ENCODE measurements at regions of chr2 and their contacts with region 1.

Region 1: DNA sequence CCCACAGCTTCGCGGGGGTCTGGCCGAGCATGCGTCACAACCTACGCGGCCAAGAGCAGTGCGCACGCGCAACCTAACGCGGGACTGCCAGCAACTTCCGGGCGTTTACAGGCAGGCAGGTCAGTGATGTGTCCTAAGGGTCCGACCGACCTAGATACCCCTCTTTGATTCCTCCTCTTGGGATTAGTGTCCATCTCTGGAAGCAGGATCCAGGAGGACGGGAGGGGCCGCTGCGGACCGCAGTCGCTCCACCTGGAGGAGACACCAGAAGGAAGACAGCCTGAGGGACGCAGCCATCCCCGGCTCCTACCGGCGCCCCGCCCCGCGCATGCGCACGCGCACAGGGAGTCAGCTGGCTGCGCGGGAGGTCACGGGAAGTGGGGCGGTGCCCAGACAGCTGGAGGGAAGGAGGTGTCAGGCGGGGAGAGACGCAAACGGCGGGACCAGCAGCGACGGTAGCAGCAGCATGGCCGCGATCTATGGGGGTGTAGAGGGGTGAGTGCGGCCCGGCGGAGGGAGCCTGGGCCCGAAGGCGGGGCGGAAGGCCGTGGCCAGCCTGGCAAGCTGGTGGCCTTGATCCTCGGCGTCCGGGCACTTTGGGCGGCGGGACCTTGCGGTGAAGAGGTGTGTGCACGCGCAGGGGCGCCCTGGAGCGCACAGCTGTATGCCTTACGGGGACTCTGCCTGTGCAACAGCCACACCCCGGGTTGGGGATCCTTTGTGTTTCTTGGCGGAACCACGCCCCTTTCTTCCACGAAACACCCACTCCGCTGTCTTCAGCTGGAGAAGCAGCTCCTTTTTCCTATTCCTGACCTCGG is at the start of gene NAGK:
- DNase-seq: peak; percentile 98
- ATAC-seq: peak; percentile 81
- H3K4me3 Mint-ChIP-seq: peak within 1 kb of the TSS; percentile 98
- H3K27ac Mint-ChIP-seq: peak within 1 kb of the TSS; percentile 97
- H3K4me1 Mint-ChIP-seq: peaks cover 53% of the 10 kb centered on the region
- H3K27me3 Mint-ChIP-seq: no peaks in the 10 kb centered on the region
- total RNA-seq, gene NAGK: 39.7 to 40.6 TPM

Region 2: DNA sequence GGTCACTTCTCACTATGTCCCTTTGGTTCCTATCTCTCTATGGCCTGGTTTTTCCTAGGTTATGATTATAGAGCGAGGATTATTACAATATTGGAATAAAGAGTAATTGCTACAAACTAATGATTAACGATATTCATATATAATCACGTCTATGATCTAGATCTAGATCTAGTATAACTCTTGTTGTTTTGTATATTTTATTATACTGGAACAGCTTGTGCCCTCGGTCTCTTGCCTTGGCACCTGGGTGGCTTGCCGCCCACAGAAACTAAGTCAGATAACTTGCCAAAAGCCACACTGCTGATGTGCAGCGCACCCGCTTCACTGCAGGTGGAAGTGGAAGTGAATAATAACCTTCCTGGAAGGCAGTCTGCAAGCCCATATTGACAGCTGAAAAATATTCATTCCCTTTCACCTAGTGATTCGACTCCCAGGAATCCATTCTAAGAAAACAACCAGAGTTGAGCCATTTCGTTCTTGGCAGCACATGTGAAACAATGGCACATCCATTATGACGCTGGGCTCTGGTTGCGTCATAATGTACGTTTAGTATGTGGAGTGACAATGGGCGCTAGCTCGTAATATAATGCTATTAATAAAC is 90.7 kb before region 1 on chr2:
- CTCF ChIA-PET with region 1: no interaction called
- POLR2A ChIA-PET with region 1: no interaction called
- intact Hi-C with region 1: loop called in 1 of 2 experiments (anchors 5 kb)
- DNase-seq: peak; percentile 60
- ATAC-seq: peak; percentile 56
- H3K4me3 Mint-ChIP-seq: peak overlapping the region; percentile 54
- H3K27ac Mint-ChIP-seq: peak overlapping the region; percentile 60
- H3K4me1 Mint-ChIP-seq: peaks cover 17% of the 10 kb centered on the region
- H3K27me3 Mint-ChIP-seq: no peaks in the 10 kb centered on the region

Region 3: GRCh38 chr2:71000780-71001591 is 67.4 kb before region 1 on chr2:
- CTCF ChIA-PET with region 1: interaction called, 17 read pairs
- POLR2A ChIA-PET with region 1: interaction called, 3 read pairs
- intact Hi-C with region 1: no loop called
- DNase-seq: peak; percentile 91
- ATAC-seq: peak; percentile 97
- H3K4me3 Mint-ChIP-seq: peak overlapping the region; percentile 77
- H3K27ac Mint-ChIP-seq: peak overlapping the region; percentile 85
- H3K4me1 Mint-ChIP-seq: peaks cover 13% of the 10 kb centered on the region
- H3K27me3 Mint-ChIP-seq: no peaks in the 10 kb centered on the region

Region 4: DNA sequence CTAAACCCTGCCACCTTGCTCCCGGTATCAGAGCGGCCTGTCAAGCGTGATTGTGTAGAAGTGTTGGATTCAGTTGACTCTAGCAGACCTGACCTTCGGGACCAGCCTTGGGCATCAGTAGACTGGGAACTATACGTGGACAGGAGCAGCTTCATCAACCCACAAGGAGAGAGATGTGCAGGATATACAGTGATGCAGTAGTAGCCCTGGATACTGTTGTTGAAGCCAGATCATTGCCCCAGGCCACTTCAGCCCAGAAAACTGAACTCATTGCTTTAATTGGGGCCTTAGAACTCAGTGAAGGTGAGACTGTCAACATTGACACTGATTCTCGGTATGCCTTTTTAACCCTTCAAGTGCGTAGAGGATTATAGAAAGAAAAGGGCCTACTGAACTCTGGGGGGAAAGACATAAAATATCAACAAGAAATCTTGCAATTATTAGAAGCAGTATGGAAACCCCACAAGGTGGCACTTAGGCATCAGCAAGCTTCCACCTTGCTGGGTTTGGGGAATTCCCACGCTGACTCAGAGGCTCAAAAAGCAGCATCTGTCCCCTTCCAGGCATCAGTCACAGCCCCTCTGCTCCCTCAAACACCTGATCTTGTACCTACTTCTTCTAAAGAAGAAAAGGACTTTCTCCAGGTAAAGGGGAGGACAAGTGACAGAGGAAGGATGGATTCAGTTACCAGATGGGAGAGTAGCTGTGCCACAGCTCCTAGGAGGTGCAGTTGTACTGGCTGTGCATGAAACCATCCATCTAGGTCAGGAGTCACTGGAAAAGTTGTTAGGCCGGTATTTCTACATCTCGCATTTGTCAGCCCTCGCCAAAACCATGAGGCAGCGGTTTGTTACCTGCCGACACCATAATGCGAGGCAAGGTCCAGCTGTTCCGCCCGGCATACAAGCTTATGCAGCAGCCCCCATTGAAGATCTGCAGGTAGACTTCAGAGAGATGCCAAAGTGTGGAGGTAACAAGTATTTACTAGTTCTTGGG is 18.8 kb before region 1 on chr2:
- CTCF ChIA-PET with region 1: interaction called, 10 read pairs
- POLR2A ChIA-PET with region 1: no interaction called
- intact Hi-C with region 1: no loop called
- DNase-seq: peak; percentile 82
- ATAC-seq: peak; percentile 81
- H3K4me3 Mint-ChIP-seq: no peak overlapping the region
- H3K27ac Mint-ChIP-seq: peak overlapping the region; percentile 37
- H3K4me1 Mint-ChIP-seq: peaks cover 13% of the 10 kb centered on the region
- H3K27me3 Mint-ChIP-seq: no peaks in the 10 kb centered on the region

Region 5: GRCh38 chr2:71226965-71227560 is 158.6 kb after region 1 on chr2 and contains the start of gene PAIP2B:
- CTCF ChIA-PET with region 1: no interaction called
- POLR2A ChIA-PET with region 1: interaction called, 6 read pairs
- intact Hi-C with region 1: loop called (anchors 1 kb)
- DNase-seq: peak; percentile 99
- ATAC-seq: peak; percentile 97
- H3K4me3 Mint-ChIP-seq: peak within 1 kb of the TSS; percentile 94
- H3K27ac Mint-ChIP-seq: peak within 1 kb of the TSS; percentile 85
- H3K4me1 Mint-ChIP-seq: peaks cover 15% of the 10 kb centered on the region
- H3K27me3 Mint-ChIP-seq: peaks cover 5% of the 10 kb centered on the region
- total RNA-seq, gene PAIP2B: 2.3 to 3.0 TPM

Region 6: DNA sequence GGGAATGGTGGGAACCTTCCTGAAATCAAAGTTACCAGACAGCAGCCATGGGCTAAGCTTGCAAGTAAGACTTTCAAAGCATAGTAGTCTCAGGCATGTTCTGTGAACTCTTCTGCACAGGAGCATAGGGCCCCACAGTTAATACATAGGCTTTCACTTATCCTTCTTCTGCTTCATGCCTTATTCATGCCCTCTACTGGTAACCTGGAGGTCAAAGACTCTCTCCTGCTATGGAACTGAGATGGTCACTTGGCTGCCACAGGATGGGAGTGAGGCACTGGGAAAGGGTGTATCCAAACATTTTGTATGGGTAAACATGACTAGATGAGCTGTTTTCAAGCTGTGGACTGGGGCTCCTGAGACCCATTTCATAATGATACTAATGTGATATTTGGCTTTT is 214.1 kb after region 1 on chr2:
- CTCF ChIA-PET with region 1: no interaction called
- POLR2A ChIA-PET with region 1: no interaction called
- intact Hi-C with region 1: no loop called
- DNase-seq: no peak
- ATAC-seq: peak; percentile 16
- H3K4me3 Mint-ChIP-seq: no peak overlapping the region
- H3K27ac Mint-ChIP-seq: no peak overlapping the region
- H3K4me1 Mint-ChIP-seq: peaks cover 5% of the 10 kb centered on the region
- H3K27me3 Mint-ChIP-seq: peaks cover 54% of the 10 kb centered on the region

Measured in activated CD4-positive, alpha-beta T cell treated with anti-CD3 and anti-CD28 coated beads for 36 hours (primary cell).